Breast epithelium (tissue), 4 donors: ENCODE measurements at regions of chr20 and their contacts with region 1.

Region 1: DNA sequence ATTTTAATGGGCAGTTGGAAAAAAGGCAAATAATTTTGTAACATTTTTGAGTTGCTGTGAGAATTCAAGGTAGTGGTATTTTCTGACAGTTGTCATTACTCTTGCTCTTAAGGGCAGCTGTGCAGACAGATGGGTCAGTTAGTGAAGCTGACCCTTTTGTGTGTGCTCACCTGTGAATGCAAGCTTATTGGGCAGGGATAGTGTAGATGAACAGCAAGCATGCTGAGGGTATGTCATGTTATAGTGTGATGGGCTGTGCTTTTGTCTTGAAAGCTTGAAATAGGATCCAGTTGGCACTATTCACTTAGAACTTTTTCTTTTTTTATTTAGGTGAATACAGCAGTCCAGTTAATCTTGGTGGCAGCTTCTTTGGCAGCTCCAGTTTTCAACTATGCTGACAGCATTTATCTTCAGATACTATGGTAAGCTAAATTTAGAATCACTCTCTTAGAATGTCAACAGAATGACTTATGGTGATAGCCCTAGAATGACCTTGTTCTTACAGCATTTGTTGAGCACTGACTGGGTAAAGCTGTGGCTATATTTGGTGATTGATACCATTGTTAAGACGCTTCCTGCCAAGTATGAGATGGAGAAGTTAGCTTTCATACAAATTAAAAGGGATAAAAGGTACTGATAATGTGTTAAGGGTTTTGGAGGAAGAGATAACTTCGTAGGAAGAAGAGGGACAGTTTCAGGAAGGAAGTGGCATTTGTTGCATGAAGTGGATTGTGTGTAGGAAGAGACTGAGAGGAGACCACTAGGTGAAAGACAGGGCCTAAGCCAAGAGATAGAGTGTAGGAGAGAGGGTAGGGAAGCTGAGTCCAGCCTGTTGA is 19.5 kb downstream of the LRRN4 start:
- DNase-seq: no peak
- H3K4me3 ChIP-seq: no peak overlapping the region
- H3K27ac ChIP-seq: no peak overlapping the region
- H3K4me1 ChIP-seq: no peaks in the 10 kb centered on the region
- H3K27me3 ChIP-seq: no peaks in the 10 kb centered on the region
- CTCF ChIP-seq: no peak
- POLR2A ChIP-seq: no peak

Region 2: GRCh38 chr20:4978050-4978918 is 1056.1 kb before region 1 on chr20:
- intact Hi-C with region 1: loop called (anchors 5 kb)
- DNase-seq: no peak
- H3K4me3 ChIP-seq: no peak overlapping the region
- H3K27ac ChIP-seq: no peak overlapping the region
- H3K4me1 ChIP-seq: peaks cover 0 to 5% of the 10 kb centered on the region in 2 donors
- H3K27me3 ChIP-seq: no peaks in the 10 kb centered on the region
- CTCF ChIP-seq: no peak
- POLR2A ChIP-seq: no peak